ENCODE measurements at regions of chr3 and their contacts with region 1.

Region 1: GRCh38 chr3:173685456-173685855 is 287.9 kb downstream of the NLGN1 start:
- DNase-seq: no peak
- H3K4me3 ChIP-seq: no peak overlapping the region
- H3K27ac ChIP-seq: no peak overlapping the region
- H3K4me1 ChIP-seq: no peaks in the 10 kb centered on the region
- H3K27me3 ChIP-seq: no peaks in the 10 kb centered on the region
- CTCF ChIP-seq: no peak

Region 2: DNA sequence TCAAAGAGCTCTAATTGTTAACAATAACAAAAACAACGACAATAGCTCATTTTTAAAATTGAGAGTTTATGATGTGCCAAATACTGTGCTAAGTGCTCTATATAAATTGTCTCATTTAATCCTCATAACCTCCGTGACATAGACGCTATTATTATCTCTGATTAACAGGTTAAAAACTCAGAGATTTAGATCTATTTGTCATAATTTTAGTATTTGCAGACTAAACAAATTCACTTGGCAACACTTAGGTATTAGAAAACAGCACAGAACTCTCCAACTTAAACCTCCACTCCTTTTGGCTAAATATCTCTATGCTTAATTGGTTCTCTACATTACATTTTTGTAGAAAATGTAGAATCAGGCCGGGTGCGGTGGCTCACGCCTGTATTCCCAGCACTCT is 680.8 kb before region 1 on chr3:
- CTCF ChIA-PET with region 1: interaction called, 10 read pairs
- POLR2A ChIA-PET with region 1: no interaction called
- intact Hi-C with region 1: no loop called
- DNase-seq: no peak
- H3K4me3 ChIP-seq: no peak overlapping the region
- H3K27ac ChIP-seq: no peak overlapping the region
- H3K4me1 ChIP-seq: no peaks in the 10 kb centered on the region
- H3K27me3 ChIP-seq: no peaks in the 10 kb centered on the region
- CTCF ChIP-seq: no peak

Region 3: DNA sequence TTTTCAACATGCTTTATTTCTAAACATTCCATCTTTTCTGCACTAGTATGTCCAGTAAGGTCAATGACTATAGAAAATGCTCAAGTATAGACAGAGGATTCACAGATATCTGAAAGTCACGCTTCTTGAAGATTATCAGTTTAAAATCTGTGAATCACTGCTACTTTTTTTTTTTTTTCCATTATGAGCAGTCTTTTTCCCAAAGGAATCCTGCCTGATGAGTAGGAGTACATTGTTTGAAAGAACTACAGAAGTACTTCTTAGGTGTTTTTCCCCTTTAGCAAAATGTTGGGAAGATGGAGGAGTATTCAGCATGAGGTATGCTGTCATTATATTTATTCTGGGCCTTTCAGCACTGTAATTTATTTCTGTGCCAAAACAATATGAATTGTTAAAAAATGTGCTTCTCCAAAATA is 21.8 kb before region 1 on chr3:
- CTCF ChIA-PET with region 1: no interaction called
- POLR2A ChIA-PET with region 1: no interaction called
- intact Hi-C with region 1: no loop called
- DNase-seq: no peak
- H3K4me3 ChIP-seq: no peak overlapping the region
- H3K27ac ChIP-seq: no peak overlapping the region
- H3K4me1 ChIP-seq: no peaks in the 10 kb centered on the region
- H3K27me3 ChIP-seq: no peaks in the 10 kb centered on the region
- CTCF ChIP-seq: no peak

Region 4: GRCh38 chr3:173891272-173892100 is 206.0 kb after region 1 on chr3:
- CTCF ChIA-PET with region 1: no interaction called
- POLR2A ChIA-PET with region 1: no interaction called
- intact Hi-C with region 1: no loop called
- DNase-seq: no peak
- H3K4me3 ChIP-seq: no peak overlapping the region
- H3K27ac ChIP-seq: no peak overlapping the region
- H3K4me1 ChIP-seq: no peaks in the 10 kb centered on the region
- H3K27me3 ChIP-seq: no peaks in the 10 kb centered on the region
- CTCF ChIP-seq: no peak

Region 5: DNA sequence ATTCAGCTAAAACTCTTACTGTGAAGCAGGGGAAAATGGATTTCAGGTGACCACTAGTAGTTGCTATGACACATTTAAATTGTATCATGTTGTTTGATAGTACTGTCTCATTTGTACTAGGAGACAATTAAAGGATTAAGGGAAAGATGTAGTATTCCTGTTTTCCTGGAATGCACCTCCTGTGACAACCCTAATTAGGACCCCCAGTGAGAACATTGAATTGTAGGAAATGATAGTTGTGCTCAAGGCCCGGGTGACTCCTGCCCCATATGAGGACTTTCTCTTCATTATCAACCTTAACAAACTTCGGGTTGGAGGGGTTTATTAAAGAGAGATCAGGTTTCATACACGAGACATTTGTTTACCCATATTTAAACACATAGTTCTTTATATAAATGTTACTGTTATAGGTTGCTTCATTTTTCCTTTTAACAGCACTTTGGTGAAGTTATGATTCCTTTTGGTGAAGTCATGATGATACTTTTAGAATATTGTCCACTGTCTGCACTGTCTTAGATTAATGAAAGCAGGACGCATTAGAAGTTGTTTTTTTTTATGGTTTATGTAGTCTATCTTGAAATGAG is 781.1 kb after region 1 on chr3:
- CTCF ChIA-PET with region 1: no interaction called
- POLR2A ChIA-PET with region 1: no interaction called
- intact Hi-C with region 1: no loop called
- DNase-seq: no peak
- H3K4me3 ChIP-seq: no peak overlapping the region
- H3K27ac ChIP-seq: no peak overlapping the region
- H3K4me1 ChIP-seq: no peaks in the 10 kb centered on the region
- H3K27me3 ChIP-seq: no peaks in the 10 kb centered on the region
- CTCF ChIP-seq: no peak